Ascending aorta (tissue), 2 donors: ENCODE measurements at regions of chr7 and their contacts with region 1.

Region 1: GRCh38 chr7:116862234-116862950 is at the start of gene CAPZA2:
- DNase-seq: peak; percentile 67 to 95
- H3K4me3 ChIP-seq: peak within 1 kb of the TSS; percentile 81 to 95
- H3K27ac ChIP-seq: peak within 1 kb of the TSS; percentile 98 to 99
- H3K4me1 ChIP-seq: peaks cover 0 to 12% of the 10 kb centered on the region in 2 donors
- H3K27me3 ChIP-seq: no peaks in the 10 kb centered on the region
- CTCF ChIP-seq: peak in 2 of 3 experiments; percentile 37 to 95
- total RNA-seq, gene CAPZA2: 80.5 TPM

Region 2: DNA sequence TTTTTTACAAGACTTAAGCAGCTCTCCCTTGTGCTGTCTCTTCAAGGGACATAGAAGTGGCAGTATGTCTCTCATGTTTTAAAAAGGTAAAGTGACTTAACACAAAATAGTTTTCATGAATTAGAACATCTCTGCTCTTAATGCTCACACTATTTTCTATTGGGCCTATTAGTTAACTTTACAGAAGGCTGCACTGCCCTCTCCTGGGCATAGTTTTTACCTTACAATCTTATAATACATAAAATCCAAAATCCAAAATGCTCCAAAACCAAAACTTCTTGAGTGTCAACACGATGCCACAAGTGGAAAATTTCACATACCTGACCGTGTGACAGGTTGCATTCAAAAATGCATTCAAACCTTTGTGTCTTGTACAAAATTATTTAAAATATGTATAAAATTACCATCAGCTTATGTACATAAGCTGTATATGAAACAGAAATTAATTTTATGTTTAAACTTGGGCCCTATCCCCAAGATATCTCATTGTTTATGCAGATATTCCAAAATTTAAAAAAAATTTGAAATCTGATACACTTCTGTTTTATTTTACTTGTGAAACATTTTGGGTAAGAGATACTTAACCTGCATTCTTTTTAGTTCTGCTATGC is 626.3 kb before region 1 on chr7:
- intact Hi-C with region 1: loop called (anchors 5 kb)
- DNase-seq: peak in 1 of 2 donors; percentile 75
- H3K4me3 ChIP-seq: no peak overlapping the region
- H3K27ac ChIP-seq: peak overlapping the region in 1 of 2 donors; percentile 91
- H3K4me1 ChIP-seq: peaks cover 8 to 62% of the 10 kb centered on the region in 2 donors
- H3K27me3 ChIP-seq: no peaks in the 10 kb centered on the region
- CTCF ChIP-seq: peak; percentile 33 to 63 (median 38)

Region 3: GRCh38 chr7:116671681-116672595 is 190.5 kb before region 1 on chr7 and contains the start of gene MET:
- intact Hi-C with region 1: loop called (anchors 2 kb)
- DNase-seq: peak; percentile 39 to 85
- H3K4me3 ChIP-seq: peak within 1 kb of the TSS; percentile 64 to 91
- H3K27ac ChIP-seq: peak within 1 kb of the TSS; percentile 62 to 79
- H3K4me1 ChIP-seq: peaks cover 0 to 3% of the 10 kb centered on the region in 2 donors
- H3K27me3 ChIP-seq: no peaks in the 10 kb centered on the region
- CTCF ChIP-seq: peak; percentile 54 to 60 (median 58)
- total RNA-seq, gene MET: 29.5 TPM

Region 4: DNA sequence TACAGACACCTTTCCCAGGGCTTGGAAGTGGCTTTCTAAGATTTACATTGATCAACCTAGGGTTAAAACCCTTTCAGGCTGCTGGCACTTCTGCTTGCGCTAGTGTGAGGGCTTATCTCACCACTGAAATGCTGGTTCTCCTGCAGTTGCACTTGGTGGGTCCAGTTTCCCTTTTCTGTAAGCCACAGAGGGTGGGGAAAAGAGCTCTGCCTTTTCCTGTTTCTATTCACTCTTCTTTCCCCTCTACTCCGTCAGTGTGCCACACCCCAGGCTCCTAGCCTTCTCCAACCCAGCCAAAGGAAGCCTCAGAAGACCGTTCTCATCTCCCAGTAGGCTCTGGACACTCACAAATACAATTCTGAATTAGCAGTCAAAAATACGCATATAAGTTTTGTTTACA is 19.0 kb before region 1 on chr7:
- intact Hi-C with region 1: loop called (anchors 2 kb)
- DNase-seq: no peak
- H3K4me3 ChIP-seq: peak overlapping the region; percentile 24 to 59
- H3K27ac ChIP-seq: peak overlapping the region; percentile 48 to 57
- H3K4me1 ChIP-seq: no peaks in the 10 kb centered on the region
- H3K27me3 ChIP-seq: no peaks in the 10 kb centered on the region
- CTCF ChIP-seq: no peak

Region 5: GRCh38 chr7:116899308-116899707 is 36.9 kb after region 1 on chr7:
- intact Hi-C with region 1: loop called (anchors 5 kb)
- DNase-seq: no peak
- H3K4me3 ChIP-seq: no peak overlapping the region
- H3K27ac ChIP-seq: no peak overlapping the region
- H3K4me1 ChIP-seq: no peaks in the 10 kb centered on the region
- H3K27me3 ChIP-seq: no peaks in the 10 kb centered on the region
- CTCF ChIP-seq: no peak

Region 6: DNA sequence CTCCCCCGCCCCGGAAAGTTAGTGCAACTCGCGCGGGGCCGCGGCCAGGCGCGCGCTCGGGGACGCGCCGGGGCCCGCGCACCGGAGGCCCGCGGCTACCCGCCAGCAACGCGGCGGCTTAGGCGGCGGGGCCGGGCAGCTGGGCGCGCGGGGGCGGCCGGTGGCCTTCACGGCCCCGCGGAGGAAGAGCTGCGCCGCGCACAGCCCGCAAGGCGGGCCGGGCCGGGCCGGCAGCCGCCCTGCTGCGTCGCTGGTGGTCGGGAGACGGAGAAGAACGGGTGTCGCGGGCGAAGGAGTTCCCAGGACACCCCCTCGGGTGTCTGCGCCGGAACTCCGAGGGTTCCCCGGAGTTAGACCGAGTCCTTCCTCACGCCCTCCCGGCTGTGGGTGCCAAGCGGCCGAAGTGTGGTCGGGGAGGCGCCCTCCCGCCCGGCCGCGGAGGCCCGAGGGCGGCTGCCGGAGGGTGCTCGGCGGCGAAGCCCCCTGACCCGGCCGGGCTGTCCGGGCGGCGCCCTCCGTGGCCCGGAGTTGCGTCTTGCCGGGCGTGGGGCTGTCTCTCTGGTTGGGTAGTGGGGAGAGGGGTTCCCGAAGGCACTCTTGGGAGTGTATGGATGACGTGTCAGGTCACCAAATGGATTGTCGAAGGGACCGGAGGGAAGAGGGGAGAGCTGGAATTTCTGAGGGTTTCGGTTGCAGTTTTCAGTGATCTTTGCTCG is 91.5 kb after region 1 on chr7:
- intact Hi-C with region 1: loop called (anchors 1 kb)
- DNase-seq: peak; percentile 12 to 83
- H3K4me3 ChIP-seq: peak overlapping the region; percentile 78 to 96
- H3K27ac ChIP-seq: peak overlapping the region; percentile 99 to 100
- H3K4me1 ChIP-seq: peaks cover 4 to 17% of the 10 kb centered on the region in 2 donors
- H3K27me3 ChIP-seq: no peaks in the 10 kb centered on the region
- CTCF ChIP-seq: no peak

Region 7: DNA sequence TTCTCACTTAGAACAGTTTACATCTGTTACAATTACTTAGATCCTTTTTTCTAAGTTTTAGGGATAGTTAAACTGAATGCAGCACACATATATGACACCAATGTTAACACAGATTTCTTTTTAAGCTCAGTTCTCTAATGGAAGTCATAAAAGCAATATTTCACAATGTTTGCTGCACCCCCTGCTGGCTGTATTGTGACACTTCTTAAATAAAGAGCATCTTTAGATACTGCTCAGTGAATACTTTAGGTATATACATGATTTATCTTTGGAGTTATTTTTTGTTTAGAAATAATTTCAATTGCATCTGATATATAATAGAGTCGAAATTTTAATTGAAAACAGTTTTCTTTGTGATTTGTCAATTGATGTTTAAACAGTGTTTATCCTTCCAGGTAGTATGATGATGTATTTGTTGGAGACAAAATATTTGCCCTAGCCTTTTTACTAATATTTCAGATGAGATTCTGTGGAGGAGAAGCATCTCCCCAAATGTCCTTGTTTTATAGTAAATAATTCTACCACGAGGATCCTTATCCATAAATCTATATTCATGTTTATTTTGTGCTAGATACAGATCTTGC is 265.3 kb after region 1 on chr7:
- intact Hi-C with region 1: loop called (anchors 5 kb)
- DNase-seq: peak in 1 of 2 donors; percentile 72
- H3K4me3 ChIP-seq: no peak overlapping the region
- H3K27ac ChIP-seq: no peak overlapping the region
- H3K4me1 ChIP-seq: peaks cover 7 to 12% of the 10 kb centered on the region in 2 donors
- H3K27me3 ChIP-seq: no peaks in the 10 kb centered on the region
- CTCF ChIP-seq: peak; percentile 60 to 68 (median 66)